A549 (cell line): ENCODE measurements at regions of chr11 and their contacts with region 1.

Region 1: DNA sequence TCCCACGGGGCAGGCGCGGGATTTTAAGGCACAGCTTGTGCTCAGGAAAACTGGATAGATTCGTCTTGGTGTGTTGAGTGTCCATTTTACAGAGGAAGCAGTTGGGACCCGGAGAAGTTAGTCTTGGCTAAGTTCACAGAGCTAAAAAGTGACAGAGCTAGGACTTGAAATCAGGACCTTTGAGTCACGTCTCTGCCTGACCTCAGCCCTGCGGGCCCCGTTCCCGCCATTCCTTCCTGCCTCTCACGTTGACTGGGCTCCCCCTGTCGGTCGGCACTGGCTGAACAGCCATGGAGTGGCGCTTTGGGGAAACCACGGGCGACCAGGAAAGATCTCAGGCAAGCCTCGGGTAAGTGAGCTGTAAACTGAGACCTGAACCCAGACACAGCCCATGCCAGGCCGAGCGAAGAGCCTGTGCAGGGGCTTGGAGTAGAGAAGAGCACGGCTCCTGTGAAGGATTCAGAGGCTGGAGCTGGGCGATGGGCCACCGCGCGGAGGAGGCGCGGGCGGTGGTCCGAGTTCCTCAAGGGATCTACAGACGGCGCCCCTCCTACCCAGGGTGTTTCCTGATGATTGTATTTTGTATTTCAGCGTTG is 54.1 kb downstream of the WNT11 start:
- DNase-seq: peak; percentile 84 to 93
- ATAC-seq: peak; percentile 91 to 96
- H3K4me3 ChIP-seq: no peak overlapping the region
- H3K27ac ChIP-seq: peak overlapping the region; percentile 40 to 63; a peak in 3 of 6 replicates
- H3K4me1 ChIP-seq: 0 out of 3 replicates have a peak, but pooled peaks cover 6% of the 10 kb centered on the region
- CTCF ChIP-seq: peak; percentile 92
- EP300 ChIP-seq: no peak
- POLR2A ChIP-seq: no peak
- RAD21 ChIP-seq: peak; percentile 95 to 98

Region 2: DNA sequence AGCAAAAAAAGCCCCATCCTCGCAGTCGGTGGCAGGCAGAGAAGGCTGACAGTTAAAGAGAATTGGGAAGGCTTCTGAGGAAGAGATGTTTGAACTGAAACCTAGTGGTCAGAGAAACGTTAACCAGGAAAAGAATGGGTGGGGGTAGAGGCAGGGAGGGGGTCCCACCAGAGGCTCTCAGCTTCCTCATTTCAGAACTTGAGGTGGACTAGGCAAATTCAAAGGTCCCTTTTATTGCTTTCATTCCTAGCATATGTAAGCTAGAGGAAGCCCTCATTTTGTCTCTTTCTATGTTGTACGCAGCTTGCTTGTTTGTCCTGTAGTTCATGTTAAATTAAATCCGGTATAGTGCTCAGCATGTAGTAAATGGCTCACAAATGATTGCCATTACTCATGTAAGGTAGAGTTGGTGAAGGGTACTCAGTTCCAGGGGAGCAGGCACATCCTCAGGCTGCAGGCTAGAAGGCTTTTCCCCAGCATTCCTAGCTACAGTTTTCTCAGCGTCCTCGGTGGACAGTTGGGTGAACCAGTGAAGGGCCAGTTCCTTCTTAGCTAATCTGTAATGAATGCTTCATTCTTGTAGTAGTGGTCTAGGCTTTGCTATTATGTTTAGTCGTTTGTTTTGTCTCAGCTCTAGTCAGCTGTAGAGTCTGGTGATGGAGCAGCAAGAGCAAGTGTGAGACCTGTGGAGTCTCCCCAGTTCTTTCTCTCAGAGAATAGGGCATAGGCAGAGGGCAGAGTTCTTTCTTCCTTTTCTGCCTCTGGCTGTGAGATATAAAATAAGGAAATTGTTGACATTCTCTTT is 278.6 kb before region 1 on chr11:
- CTCF ChIA-PET with region 1: interaction called, 12 read pairs
- POLR2A ChIA-PET with region 1: no interaction called
- DNase-seq: no peak
- ATAC-seq: no peak
- H3K4me3 ChIP-seq: no peak overlapping the region
- H3K27ac ChIP-seq: no peak overlapping the region
- H3K4me1 ChIP-seq: no peaks in the 10 kb centered on the region
- CTCF ChIP-seq: no peak
- EP300 ChIP-seq: no peak
- POLR2A ChIP-seq: no peak
- RAD21 ChIP-seq: no peak

Region 3: GRCh38 chr11:76120513-76121101 is 31.6 kb before region 1 on chr11:
- CTCF ChIA-PET with region 1: interaction called, 13 read pairs
- POLR2A ChIA-PET with region 1: no interaction called
- DNase-seq: no peak
- ATAC-seq: no peak
- H3K4me3 ChIP-seq: no peak overlapping the region
- H3K27ac ChIP-seq: no peak overlapping the region
- H3K4me1 ChIP-seq: no peaks in the 10 kb centered on the region
- CTCF ChIP-seq: no peak
- EP300 ChIP-seq: no peak
- POLR2A ChIP-seq: no peak
- RAD21 ChIP-seq: no peak

Region 4: GRCh38 chr11:76140912-76141574 is 11.1 kb before region 1 on chr11:
- CTCF ChIA-PET with region 1: interaction called, 37 read pairs
- POLR2A ChIA-PET with region 1: no interaction called
- DNase-seq: no peak
- ATAC-seq: no peak; a peak in 1 of 6 replicates
- H3K4me3 ChIP-seq: no peak overlapping the region
- H3K27ac ChIP-seq: no peak overlapping the region
- H3K4me1 ChIP-seq: no peaks in the 10 kb centered on the region
- CTCF ChIP-seq: no peak
- EP300 ChIP-seq: no peak
- POLR2A ChIP-seq: no peak
- RAD21 ChIP-seq: no peak

Region 5: GRCh38 chr11:76318744-76319384 is 166.7 kb after region 1 on chr11:
- CTCF ChIA-PET with region 1: interaction called, 14 read pairs
- POLR2A ChIA-PET with region 1: no interaction called
- DNase-seq: peak; percentile 83 to 85
- ATAC-seq: peak; percentile 90 to 98
- H3K4me3 ChIP-seq: no peak overlapping the region
- H3K27ac ChIP-seq: no peak overlapping the region
- H3K4me1 ChIP-seq: no peaks in the 10 kb centered on the region
- CTCF ChIP-seq: peak; percentile 97
- EP300 ChIP-seq: no peak
- POLR2A ChIP-seq: no peak
- RAD21 ChIP-seq: peak; percentile 98